ENCODE measurements at regions of chr2 and their contacts with region 1.

Region 1: DNA sequence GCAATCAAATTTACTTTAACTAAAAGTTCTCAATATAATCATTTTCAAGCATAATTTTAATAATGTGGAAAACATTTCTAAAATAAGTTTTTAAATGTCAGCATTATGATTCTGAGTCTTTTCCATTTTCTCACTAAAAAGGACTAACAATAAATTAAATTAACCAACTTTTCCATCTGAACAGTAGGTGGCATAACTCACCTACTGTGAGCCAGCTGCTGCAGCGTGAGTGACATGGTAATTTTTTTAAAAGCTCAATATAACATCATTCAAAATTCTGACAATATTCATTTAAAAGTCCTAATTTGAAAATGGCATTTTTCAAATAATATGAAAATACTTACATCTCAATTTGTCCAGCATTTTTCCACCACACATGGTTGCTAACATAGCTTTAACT is 66.5 kb downstream of the DTNB start:
- DNase-seq: peak; percentile 27 to 60
- ATAC-seq: peak; percentile 68 to 78; a peak in 5 of 6 replicates
- H3K4me3 ChIP-seq: no peak overlapping the region
- H3K27ac ChIP-seq: no peak overlapping the region
- H3K4me1 ChIP-seq: peaks cover 12% of the 10 kb centered on the region
- CTCF ChIP-seq: peak; percentile 98
- EP300 ChIP-seq: no peak
- POLR2A ChIP-seq: no peak
- RAD21 ChIP-seq: peak; percentile 97 to 98

Region 2: GRCh38 chr2:25354116-25354515 is 252.8 kb before region 1 on chr2:
- CTCF ChIA-PET with region 1: no interaction called
- POLR2A ChIA-PET with region 1: no interaction called
- DNase-seq: no peak
- ATAC-seq: no peak
- H3K4me3 ChIP-seq: no peak overlapping the region
- H3K27ac ChIP-seq: no peak overlapping the region
- H3K4me1 ChIP-seq: 0 out of 3 replicates have a peak, but pooled peaks cover 3% of the 10 kb centered on the region
- CTCF ChIP-seq: no peak
- EP300 ChIP-seq: no peak
- POLR2A ChIP-seq: no peak
- RAD21 ChIP-seq: no peak

Region 3: DNA sequence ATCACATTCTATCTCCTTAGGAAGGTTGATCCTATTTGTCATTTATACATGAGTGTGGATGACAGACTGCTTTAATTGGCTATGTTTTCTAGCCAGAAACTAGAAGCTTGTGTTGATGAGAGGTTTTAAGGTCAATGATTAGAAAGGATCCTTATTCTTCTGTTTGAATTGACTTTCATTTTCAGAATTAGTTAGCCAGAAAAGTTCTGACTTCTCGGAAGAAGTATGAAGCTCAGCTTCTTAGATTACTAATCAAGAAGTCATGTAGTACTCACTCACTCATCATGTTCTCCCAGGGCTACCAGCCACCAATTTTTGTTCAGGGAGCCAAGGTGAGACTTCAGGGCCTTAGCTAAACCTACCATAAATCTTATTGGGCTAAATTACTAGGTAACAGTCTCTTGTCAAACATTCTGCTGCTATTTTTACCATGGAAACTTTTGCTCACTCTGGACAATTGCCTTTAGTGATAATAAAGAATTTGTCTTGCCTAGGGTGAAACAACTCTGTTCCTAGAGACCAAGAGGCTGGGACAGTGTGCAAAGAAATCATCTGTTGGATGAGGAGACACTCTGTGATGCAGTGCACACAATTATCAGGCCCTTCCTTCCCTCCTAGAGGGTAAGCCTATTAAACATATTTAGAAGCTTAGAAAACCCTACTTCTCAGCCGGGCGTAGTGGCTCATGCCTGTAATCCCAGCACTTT is 153.5 kb before region 1 on chr2:
- CTCF ChIA-PET with region 1: no interaction called
- POLR2A ChIA-PET with region 1: no interaction called
- DNase-seq: no peak
- ATAC-seq: no peak
- H3K4me3 ChIP-seq: no peak overlapping the region
- H3K27ac ChIP-seq: no peak overlapping the region
- H3K4me1 ChIP-seq: no peaks in the 10 kb centered on the region
- CTCF ChIP-seq: no peak
- EP300 ChIP-seq: no peak
- POLR2A ChIP-seq: no peak
- RAD21 ChIP-seq: no peak

Region 4: DNA sequence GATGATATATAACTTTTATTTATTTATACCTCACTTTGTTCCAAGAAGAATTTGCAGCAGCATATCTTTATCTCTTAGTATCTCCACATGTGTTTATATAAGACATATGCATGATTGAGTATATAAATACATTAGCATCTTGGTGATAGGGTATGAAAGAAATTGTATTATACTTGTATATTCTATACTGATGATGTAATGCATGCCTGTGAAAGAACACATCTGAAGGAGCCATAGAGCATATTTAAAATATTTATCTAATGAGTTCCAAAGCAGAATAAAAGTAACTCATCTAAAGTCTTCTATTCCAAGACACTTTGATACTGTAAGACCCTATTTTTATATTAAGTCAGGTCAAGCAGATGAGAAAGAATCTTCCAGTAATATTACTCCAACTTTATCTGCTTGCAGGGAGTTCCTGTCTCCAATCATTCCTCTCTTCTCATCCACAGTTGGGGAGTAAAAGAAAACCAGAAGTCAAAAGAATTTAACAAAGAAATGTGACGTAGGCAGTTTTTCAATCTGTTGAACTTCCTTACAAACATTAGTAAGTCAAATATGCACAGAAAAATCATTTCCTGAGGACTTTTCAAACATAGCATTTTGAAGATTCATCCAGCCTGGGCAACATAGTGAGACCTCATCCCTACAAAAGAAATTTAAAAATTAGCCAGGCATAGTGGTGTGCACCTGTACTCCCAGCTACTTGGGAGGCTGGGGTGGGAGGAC is 10.2 kb before region 1 on chr2:
- CTCF ChIA-PET with region 1: interaction called, 34 read pairs
- POLR2A ChIA-PET with region 1: no interaction called
- DNase-seq: no peak
- ATAC-seq: no peak
- H3K4me3 ChIP-seq: no peak overlapping the region
- H3K27ac ChIP-seq: no peak overlapping the region
- H3K4me1 ChIP-seq: no peaks in the 10 kb centered on the region
- CTCF ChIP-seq: no peak
- EP300 ChIP-seq: no peak
- POLR2A ChIP-seq: no peak
- RAD21 ChIP-seq: no peak

Region 5: DNA sequence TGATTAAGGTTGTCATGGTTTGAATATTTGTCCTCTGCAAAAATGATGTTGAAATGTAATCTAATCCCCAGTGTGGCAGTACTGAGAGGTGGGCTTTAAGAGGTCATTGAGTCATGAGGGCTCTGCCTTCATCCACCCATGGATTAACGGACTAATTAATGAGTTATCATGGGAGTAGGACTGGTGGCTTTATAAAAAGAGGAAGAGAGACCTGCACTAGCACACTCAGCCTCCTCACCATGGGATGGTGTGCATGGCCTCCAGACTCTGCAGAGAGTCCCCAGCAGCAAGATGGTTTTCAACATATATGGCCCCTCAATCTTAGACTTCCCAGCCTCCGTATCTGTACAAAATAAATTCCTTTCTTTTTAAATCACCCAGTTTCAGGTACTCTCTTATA is 25.5 kb after region 1 on chr2:
- CTCF ChIA-PET with region 1: interaction called, 10 read pairs
- POLR2A ChIA-PET with region 1: no interaction called
- DNase-seq: no peak
- ATAC-seq: peak in 1 of 2 experiments; percentile 34; a peak in 2 of 6 replicates
- H3K4me3 ChIP-seq: no peak overlapping the region
- H3K27ac ChIP-seq: no peak overlapping the region
- H3K4me1 ChIP-seq: peaks cover 9% of the 10 kb centered on the region; the same call in 2 of the 3 replicates
- CTCF ChIP-seq: no peak
- EP300 ChIP-seq: no peak
- POLR2A ChIP-seq: no peak
- RAD21 ChIP-seq: no peak

Region 6: GRCh38 chr2:25651071-25651470 is 44.2 kb after region 1 on chr2:
- CTCF ChIA-PET with region 1: interaction called, 37 read pairs
- POLR2A ChIA-PET with region 1: no interaction called
- DNase-seq: no peak
- ATAC-seq: no peak
- H3K4me3 ChIP-seq: no peak overlapping the region
- H3K27ac ChIP-seq: no peak overlapping the region
- H3K4me1 ChIP-seq: 0 out of 3 replicates have a peak, but pooled peaks cover 7% of the 10 kb centered on the region
- CTCF ChIP-seq: no peak
- EP300 ChIP-seq: no peak
- POLR2A ChIP-seq: no peak
- RAD21 ChIP-seq: no peak

Region 7: DNA sequence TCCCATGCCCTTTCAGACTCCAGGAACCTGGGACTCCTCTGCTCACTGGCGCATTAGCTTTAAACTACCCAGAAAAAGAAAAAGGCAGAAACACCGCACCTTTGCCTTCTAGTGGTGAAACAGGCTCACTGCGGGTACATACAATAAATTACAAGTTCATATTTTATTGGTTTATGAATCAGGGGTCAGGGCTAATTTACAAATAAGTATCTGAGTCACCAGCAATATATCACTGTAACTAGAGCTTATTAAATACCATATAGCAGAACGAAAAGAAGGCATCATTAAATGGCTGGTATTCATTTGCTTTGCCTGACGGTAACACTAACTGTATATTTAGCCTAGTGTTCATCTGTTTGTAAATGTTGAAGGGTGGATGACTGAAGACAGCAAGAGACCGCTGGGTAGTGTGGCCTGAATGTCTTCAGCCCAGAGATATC is 93.3 kb after region 1 on chr2:
- CTCF ChIA-PET with region 1: interaction called, 126 read pairs
- POLR2A ChIA-PET with region 1: no interaction called
- DNase-seq: peak; percentile 55 to 70
- ATAC-seq: peak; percentile 75 to 82
- H3K4me3 ChIP-seq: no peak overlapping the region
- H3K27ac ChIP-seq: no peak overlapping the region
- H3K4me1 ChIP-seq: peaks cover 13% of the 10 kb centered on the region; the same call in 1 of the 3 replicates
- CTCF ChIP-seq: peak; percentile 68
- EP300 ChIP-seq: no peak
- POLR2A ChIP-seq: no peak
- RAD21 ChIP-seq: peak; percentile 63 to 77

Region 8: GRCh38 chr2:25714740-25715139 is 107.8 kb after region 1 on chr2:
- CTCF ChIA-PET with region 1: interaction called, 22 read pairs
- POLR2A ChIA-PET with region 1: no interaction called
- DNase-seq: peak; percentile 31 to 66
- ATAC-seq: peak; percentile 86 to 88
- H3K4me3 ChIP-seq: no peak overlapping the region
- H3K27ac ChIP-seq: no peak overlapping the region
- H3K4me1 ChIP-seq: peaks cover 6% of the 10 kb centered on the region; the same call in 2 of the 3 replicates
- CTCF ChIP-seq: peak; percentile 21; the same call in 1 of the 3 replicates
- EP300 ChIP-seq: no peak
- POLR2A ChIP-seq: no peak
- RAD21 ChIP-seq: peak; percentile 25 to 58; a peak in 2 of 5 replicates

Measured in A549 (cell line).